ENCODE measurements at regions of chr6 and their contacts with region 1.

Region 1: DNA sequence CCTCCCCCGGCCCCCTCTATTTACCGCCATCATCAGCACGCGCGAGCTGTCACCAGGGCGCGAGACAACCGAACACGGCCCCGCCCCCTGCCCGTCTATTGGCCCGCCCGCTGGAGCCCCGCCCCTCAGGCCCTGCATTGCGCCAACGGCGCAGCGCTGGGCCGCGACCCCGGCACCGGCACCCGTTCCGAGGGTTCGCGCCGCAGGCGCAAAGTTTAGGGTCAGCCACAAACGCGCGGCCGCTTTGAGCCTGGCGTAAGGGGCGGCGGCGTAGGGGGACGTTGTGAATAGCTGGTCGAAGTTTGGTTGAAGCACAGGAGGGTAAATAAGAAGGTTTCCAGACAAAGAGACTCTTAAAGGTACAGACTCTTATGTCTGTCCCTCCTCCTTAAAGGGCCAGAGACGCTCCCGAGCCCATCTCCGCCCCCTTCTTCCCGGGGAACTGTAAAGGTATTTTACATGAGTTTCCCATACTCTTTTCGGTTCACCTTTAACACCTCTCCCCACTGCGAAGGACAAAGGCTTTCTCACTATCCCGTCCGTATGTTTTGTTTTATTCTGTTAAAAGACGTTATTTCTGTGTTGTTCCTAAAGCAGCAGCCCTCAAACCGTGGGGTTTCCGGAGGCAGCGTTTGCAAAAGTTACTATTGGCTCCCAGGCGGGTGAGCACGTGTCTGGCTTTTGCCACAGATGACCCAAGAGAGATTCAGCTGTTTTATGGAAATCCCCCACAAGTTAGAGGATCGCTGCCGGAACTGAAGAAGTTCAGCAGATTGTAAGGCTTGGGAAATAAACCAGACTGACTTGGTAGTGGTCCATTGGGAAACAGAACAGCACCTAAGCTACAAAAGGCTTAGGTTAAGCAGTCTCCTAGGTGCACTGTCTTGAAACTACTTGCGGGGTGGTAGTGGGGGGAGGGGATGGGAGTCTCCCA is at the start of gene USP49:
- DNase-seq: peak; percentile 77 to 94 (median 88)
- ATAC-seq: peak; percentile 94 to 98 (median 96)
- H3K4me3 ChIP-seq: peak within 1 kb of the TSS; percentile 85 to 92
- H3K4me3 Mint-ChIP-seq: no peak within 1 kb of the TSS
- H3K27ac ChIP-seq: peak within 1 kb of the TSS; percentile 59
- H3K27ac Mint-ChIP-seq: peak within 1 kb of the TSS; percentile 70 to 88
- H3K4me1 ChIP-seq: peaks cover 15 to 21% of the 10 kb centered on the region in 2 experiments
- H3K4me1 Mint-ChIP-seq: peaks cover 9 to 17% (median 11%) of the 10 kb centered on the region in 3 donors
- H3K27me3 ChIP-seq: peaks cover 0 to 6% of the 10 kb centered on the region in 2 experiments
- H3K27me3 Mint-ChIP-seq: no peaks in the 10 kb centered on the region
- total RNA-seq, gene USP49: 2.5 to 5.2 (median 3.3) TPM

Region 2: GRCh38 chr6:41545703-41546474 is 349.7 kb before region 1 on chr6 and contains the start of gene FOXP4:
- CTCF ChIA-PET with region 1: no interaction called
- POLR2A ChIA-PET with region 1: no interaction called
- DNase-seq: peak; percentile 60 to 90 (median 75)
- ATAC-seq: peak; percentile 88 to 89 (median 89)
- H3K4me3 ChIP-seq: peak within 1 kb of the TSS; percentile 60 to 80
- H3K4me3 Mint-ChIP-seq: peak within 1 kb of the TSS; percentile 87 to 93 (median 87)
- H3K27ac ChIP-seq: no peak within 1 kb of the TSS
- H3K27ac Mint-ChIP-seq: peak within 1 kb of the TSS; percentile 23 to 41
- H3K4me1 ChIP-seq: peaks cover 13 to 40% of the 10 kb centered on the region in 2 experiments
- H3K4me1 Mint-ChIP-seq: peaks cover 23 to 35% (median 28%) of the 10 kb centered on the region in 3 donors
- H3K27me3 ChIP-seq: peaks cover 0 to 36% of the 10 kb centered on the region in 2 experiments
- H3K27me3 Mint-ChIP-seq: peaks cover 5 to 11% of the 10 kb centered on the region in 2 donors
- total RNA-seq, gene FOXP4: 4.6 to 10.1 (median 9.5) TPM

Region 3: DNA sequence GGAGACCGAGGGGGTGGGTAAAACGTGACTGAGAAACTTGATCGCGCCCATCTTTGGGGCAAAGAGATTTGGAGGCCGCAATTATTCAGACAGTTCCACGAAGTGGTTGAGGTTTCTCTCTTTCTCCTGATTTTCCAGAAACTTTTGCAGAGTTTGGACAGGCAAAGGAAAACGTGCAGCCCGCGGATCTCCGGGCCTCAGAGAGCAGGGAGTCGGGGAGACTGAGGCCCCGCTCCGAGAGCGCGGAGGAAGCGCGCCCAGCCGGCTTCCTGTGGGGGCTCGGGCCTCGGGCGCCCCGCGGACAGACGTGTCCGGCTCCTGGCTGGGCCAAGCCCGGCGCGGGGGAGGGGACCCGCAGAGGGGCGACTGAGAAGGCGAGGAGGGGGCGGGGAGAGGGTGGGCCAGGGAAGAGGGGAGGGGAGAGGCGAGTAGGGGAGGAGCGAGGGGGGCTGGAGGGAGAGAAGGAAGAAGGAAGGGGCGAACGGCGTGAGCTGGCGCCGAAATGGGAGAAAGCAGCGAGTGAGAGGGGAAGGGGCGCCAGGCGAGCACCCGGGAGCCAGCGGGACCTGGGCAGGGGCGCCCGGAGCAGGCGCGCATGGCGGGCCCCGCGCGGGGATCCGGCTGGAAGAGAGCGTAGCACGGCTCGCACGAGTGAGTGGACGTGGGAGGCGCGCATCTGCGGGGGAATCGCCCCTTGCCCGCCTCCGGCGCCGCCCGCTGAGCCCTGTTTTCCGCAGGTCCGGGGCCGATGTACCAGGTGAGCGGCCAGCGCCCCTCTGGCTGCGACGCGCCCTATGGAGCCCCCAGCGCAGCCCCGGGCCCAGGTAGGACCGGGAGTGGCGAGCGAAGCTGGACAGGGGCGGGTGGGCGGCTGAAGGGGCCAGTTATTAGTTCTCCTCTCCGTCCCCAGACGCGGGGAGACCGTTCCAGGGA is 257.3 kb before region 1 on chr6 and contains the start of gene MDFI:
- CTCF ChIA-PET with region 1: no interaction called
- POLR2A ChIA-PET with region 1: no interaction called
- DNase-seq: no peak
- ATAC-seq: peak in 2 of 4 experiments; percentile 32 to 42
- H3K4me3 ChIP-seq: peak within 1 kb of the TSS in 1 of 2 donors; percentile 58
- H3K4me3 Mint-ChIP-seq: peak within 1 kb of the TSS; percentile 55 to 59 (median 56)
- H3K27ac ChIP-seq: no peak within 1 kb of the TSS
- H3K27ac Mint-ChIP-seq: peak within 1 kb of the TSS in 1 of 2 donors; percentile 61
- H3K4me1 ChIP-seq: peaks cover 2 to 14% of the 10 kb centered on the region in 2 experiments
- H3K4me1 Mint-ChIP-seq: peaks cover 5 to 12% (median 9%) of the 10 kb centered on the region in 3 donors
- H3K27me3 ChIP-seq: peaks cover 0 to 64% of the 10 kb centered on the region in 2 experiments
- H3K27me3 Mint-ChIP-seq: peaks cover 40 to 71% of the 10 kb centered on the region in 2 donors
- total RNA-seq, gene MDFI: not detected

Region 4: DNA sequence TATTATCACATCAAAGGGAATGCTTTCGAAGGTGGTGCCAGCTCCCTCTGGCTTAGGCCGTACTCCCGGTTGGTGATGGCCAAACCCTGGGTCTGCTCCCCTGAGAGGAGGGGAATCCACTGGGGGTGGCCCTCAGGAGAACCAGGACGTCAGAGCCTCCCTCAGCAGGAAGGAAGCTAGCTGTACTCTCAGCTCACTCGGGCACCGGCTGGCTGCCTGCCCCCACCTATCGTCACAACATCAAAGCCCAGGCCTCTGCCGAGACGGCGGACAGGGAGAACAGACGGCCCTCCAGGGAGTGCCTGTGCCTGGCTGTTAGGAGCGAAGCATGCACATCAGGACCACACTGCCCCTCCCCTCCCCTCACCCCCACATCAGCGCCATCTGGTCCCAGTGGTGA is 139.2 kb before region 1 on chr6:
- CTCF ChIA-PET with region 1: no interaction called
- POLR2A ChIA-PET with region 1: no interaction called
- DNase-seq: no peak
- ATAC-seq: peak in 2 of 4 experiments; percentile 36
- H3K4me3 ChIP-seq: no peak overlapping the region
- H3K4me3 Mint-ChIP-seq: no peak overlapping the region
- H3K27ac ChIP-seq: no peak overlapping the region
- H3K27ac Mint-ChIP-seq: no peak overlapping the region
- H3K4me1 ChIP-seq: peaks cover 2 to 3% of the 10 kb centered on the region in 2 experiments
- H3K4me1 Mint-ChIP-seq: peaks cover 0 to 3% (median 0%) of the 10 kb centered on the region in 3 donors
- H3K27me3 ChIP-seq: peaks cover 0 to 12% of the 10 kb centered on the region in 2 experiments
- H3K27me3 Mint-ChIP-seq: no peaks in the 10 kb centered on the region

Region 5: DNA sequence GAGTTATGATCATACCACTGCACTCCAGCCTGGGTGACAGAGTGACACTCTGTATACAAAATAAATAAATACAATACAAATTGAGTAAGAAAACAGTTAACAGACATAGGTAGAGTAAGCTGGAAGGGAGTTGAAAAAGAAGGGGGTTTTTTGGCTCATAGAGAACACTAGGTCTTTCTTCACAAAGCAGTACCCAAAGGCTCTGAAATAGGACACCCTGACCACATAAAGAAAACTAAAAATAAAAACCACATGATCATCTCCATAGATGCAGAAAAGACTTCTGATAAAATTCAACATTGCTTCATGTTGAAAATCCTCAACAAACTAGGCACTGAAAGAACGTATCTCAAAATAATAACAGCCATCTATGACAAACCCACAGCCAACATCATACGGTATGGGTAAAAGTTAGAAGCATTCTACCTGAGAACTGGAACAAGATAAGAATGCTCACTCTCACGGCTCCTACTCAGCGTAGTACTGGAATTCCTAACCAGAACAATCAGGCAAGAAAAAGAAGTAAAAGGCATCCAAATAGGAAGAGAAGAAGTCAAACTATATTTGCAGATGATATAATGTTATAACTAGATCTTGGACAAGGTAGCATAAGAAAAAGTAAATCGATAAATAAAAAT is 59.4 kb before region 1 on chr6:
- CTCF ChIA-PET with region 1: no interaction called
- POLR2A ChIA-PET with region 1: interaction called in 1 of 2 experiments, 11 read pairs
- DNase-seq: no peak
- ATAC-seq: peak in 1 of 4 experiments; percentile 31
- H3K4me3 ChIP-seq: no peak overlapping the region
- H3K4me3 Mint-ChIP-seq: no peak overlapping the region
- H3K27ac ChIP-seq: no peak overlapping the region
- H3K27ac Mint-ChIP-seq: no peak overlapping the region
- H3K4me1 ChIP-seq: no peaks in the 10 kb centered on the region
- H3K4me1 Mint-ChIP-seq: peaks cover 3 to 13% (median 3%) of the 10 kb centered on the region in 3 donors
- H3K27me3 ChIP-seq: no peaks in the 10 kb centered on the region
- H3K27me3 Mint-ChIP-seq: no peaks in the 10 kb centered on the region

Region 6: DNA sequence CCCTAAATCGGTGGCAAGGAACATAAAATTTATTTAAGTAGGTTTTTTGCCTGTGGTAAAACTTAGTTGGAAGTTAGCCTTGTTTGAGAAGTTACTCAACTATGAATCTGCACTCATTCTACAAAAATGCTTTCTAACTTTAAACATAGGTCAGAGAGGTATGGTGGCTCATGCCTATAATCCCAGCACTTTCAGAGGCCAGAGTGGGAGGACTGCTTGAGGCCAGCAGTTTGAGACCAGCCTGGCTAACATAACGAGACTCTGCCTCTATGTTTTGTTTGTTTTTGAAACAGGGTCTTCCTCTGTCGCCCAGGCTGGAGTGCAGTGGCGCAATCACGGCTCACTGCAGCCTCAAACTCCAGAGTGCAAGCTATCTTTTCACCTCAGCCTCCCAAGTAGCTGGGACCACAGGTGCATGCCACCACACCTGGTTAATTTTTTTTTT is 16.6 kb before region 1 on chr6:
- CTCF ChIA-PET with region 1: no interaction called
- POLR2A ChIA-PET with region 1: interaction called in 1 of 2 experiments, 13 read pairs
- DNase-seq: no peak
- ATAC-seq: no peak
- H3K4me3 ChIP-seq: no peak overlapping the region
- H3K4me3 Mint-ChIP-seq: no peak overlapping the region
- H3K27ac ChIP-seq: no peak overlapping the region
- H3K27ac Mint-ChIP-seq: no peak overlapping the region
- H3K4me1 ChIP-seq: no peaks in the 10 kb centered on the region
- H3K4me1 Mint-ChIP-seq: no peaks in the 10 kb centered on the region
- H3K27me3 ChIP-seq: no peaks in the 10 kb centered on the region
- H3K27me3 Mint-ChIP-seq: no peaks in the 10 kb centered on the region

Region 7: DNA sequence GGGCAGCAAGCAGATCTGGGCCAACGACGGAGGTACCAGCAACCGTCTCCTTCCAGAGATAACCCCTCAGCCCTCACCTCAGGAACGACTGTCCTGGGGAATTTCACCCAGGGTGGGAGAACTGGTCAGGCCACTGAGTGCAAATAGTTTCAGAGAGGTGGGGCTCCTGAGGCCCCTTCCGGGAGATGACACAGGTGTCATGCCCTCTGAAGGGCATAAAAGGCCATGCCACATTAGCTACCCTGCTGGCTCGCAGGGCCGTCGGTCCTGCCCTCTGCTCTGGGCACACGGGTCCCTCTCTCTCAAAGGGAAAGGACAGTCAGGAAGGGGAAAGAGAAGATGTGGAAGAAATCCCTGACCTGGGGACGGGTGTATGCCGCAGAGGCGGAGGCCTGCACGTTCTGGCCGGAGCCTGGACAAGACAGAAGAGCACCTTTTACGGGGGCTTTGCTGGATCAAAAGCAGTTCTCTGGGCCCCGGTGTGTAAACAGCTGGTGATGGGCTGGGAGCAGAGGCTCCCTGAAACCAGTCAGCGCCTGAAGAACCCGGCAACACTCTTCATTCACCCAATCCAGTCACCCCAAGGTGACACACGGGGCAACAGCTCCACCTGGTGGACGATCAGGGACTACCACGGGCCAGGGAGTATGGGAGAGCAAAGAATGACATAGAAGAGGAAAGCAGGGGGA is 148.4 kb after region 1 on chr6:
- CTCF ChIA-PET with region 1: interaction called, 6 to 16 read pairs
- POLR2A ChIA-PET with region 1: interaction called in 1 of 2 experiments, 11 read pairs
- DNase-seq: peak; percentile 78 to 96 (median 91)
- ATAC-seq: peak; percentile 21 to 28 (median 24)
- H3K4me3 ChIP-seq: peak overlapping the region; percentile 44 to 60
- H3K4me3 Mint-ChIP-seq: peak overlapping the region; percentile 72 to 99 (median 73)
- H3K27ac ChIP-seq: peak overlapping the region; percentile 58
- H3K27ac Mint-ChIP-seq: peak overlapping the region; percentile 95 to 96
- H3K4me1 ChIP-seq: peaks cover 39 to 87% of the 10 kb centered on the region in 2 experiments
- H3K4me1 Mint-ChIP-seq: peaks cover 77 to 88% (median 87%) of the 10 kb centered on the region in 3 donors
- H3K27me3 ChIP-seq: no peaks in the 10 kb centered on the region
- H3K27me3 Mint-ChIP-seq: no peaks in the 10 kb centered on the region

Region 8: DNA sequence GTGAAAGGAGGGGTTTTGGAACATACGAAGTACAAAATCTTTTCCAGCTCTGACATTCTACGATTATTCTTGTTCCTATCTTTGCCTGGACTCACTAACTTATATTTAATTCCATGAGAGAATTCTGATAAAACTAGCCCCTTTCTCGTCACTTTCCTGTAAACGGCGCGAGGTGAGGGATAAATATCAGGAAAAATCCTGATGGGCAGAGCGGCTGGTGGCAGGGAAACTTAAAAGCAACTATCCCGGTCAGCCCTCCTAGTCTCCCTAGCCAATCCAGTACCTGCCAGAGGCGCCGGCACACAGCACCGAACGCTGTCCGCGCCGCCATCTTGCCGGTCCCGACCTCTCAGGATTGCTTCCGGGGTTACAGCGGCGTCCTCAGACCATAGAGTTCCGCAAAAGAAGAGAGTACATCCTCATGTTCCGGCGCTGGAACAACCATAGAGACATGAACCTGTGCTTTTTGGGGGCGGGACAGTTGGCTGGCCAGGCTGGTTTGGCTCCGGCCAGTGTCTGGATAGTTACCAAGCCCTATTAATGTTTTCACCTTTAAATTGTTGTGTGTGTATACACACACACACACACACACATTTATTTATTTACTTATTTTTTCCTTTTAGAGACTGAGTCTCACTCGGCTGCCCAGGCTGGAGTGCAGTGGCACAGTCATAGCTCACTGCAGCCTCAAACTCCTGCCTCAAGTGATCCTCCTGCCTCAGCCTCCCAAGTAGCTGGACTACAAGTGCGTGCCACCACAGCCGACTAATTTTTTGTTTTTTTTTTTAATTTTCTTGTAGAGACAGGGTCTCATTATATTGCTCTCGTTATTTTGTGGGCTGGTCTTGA is 322.2 kb after region 1 on chr6 and contains the start of gene MRPS10:
- CTCF ChIA-PET with region 1: interaction called in 1 of 2 experiments, 11 read pairs
- POLR2A ChIA-PET with region 1: interaction called in 1 of 2 experiments, 3 read pairs
- DNase-seq: peak; percentile 72 to 95 (median 89)
- ATAC-seq: peak; percentile 99 to 100 (median 99)
- H3K4me3 ChIP-seq: peak within 1 kb of the TSS; percentile 77 to 85
- H3K4me3 Mint-ChIP-seq: peak within 1 kb of the TSS; percentile 97 to 99 (median 98)
- H3K27ac ChIP-seq: peak within 1 kb of the TSS; percentile 75
- H3K27ac Mint-ChIP-seq: peak within 1 kb of the TSS; percentile 96 to 97
- H3K4me1 ChIP-seq: peaks cover 8 to 28% of the 10 kb centered on the region in 2 experiments
- H3K4me1 Mint-ChIP-seq: peaks cover 15 to 32% (median 25%) of the 10 kb centered on the region in 3 donors
- H3K27me3 ChIP-seq: no peaks in the 10 kb centered on the region
- H3K27me3 Mint-ChIP-seq: no peaks in the 10 kb centered on the region
- total RNA-seq, gene MRPS10: 17.6 to 23.6 (median 20.5) TPM